Caco-2 (cell line): ENCODE measurements at regions of chr19 and their contacts with region 1.

Region 1: DNA sequence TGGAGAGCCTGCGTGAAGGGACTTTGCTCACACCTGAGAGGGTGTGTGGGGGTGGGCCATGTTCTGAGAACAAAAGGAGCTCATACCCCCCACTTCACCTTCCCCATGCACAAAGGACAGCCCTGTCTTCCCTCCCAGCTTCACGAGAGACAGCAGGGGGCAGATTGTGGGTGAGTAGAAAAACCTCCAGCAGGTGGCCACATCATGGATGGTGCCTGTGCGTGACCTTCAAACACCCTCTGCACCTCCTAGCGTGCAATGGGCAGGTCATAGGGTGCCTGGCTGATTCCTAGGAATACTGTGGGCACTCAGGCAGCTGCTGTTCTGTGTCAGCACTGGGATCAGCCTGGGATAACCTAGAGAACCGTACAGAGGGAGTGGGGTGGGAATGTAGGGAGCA is 36.3 kb upstream of the PSG9 start:
- DNase-seq: peak in 1 of 2 experiments; percentile 16
- H3K4me3 ChIP-seq: no peak overlapping the region
- H3K4me3 Mint-ChIP-seq: no peak overlapping the region
- H3K27ac Mint-ChIP-seq: no peak overlapping the region
- H3K4me1 ChIP-seq: no peaks in the 10 kb centered on the region
- H3K4me1 Mint-ChIP-seq: no peaks in the 10 kb centered on the region
- H3K27me3 ChIP-seq: no peaks in the 10 kb centered on the region
- H3K27me3 Mint-ChIP-seq: no peaks in the 10 kb centered on the region
- CTCF ChIP-seq: peak in 1 of 2 experiments; percentile 24

Region 2: DNA sequence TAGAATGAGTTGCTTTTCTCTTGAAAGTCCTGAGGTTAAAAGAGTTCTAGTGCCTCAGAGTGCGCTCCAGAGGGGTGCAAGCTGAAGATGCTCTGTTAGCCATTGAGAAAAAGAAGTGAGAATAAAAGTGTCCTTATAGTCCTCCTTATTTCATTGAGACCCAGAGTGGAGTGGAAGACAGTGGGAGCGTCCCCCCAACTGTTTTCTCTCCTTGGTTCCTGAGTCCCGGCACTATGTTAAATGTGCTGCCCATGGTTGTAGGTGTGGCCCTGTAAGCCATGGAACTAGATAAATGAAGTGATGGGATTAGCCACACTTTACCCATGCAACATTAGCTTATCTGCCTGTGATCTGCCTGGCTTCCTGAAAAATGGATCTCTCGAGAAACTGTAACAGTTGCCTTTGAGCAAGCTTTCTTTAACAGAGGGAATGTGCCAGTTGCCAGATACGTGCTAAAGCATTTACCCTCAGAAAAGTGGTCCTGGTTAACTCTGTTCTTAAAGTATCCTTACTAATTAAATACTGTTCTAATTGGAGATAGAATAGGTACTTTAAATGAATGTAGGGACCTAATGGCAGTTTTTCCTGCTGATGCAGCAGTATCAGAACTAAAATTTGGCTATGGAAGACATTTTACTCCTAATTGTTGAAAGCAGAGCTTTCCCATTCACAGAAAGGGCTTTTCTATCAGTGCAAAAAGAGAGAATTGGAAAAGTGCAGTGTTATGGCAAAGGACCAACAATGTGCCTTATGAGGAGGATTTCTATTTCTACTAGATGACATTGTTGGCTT is 14.9 kb before region 1 on chr19:
- CTCF ChIA-PET with region 1: no interaction called
- POLR2A ChIA-PET with region 1: no interaction called
- intact Hi-C with region 1: no loop called
- DNase-seq: peak in 1 of 2 experiments; percentile 60
- H3K4me3 ChIP-seq: no peak overlapping the region
- H3K4me3 Mint-ChIP-seq: no peak overlapping the region
- H3K27ac Mint-ChIP-seq: no peak overlapping the region
- H3K4me1 ChIP-seq: no peaks in the 10 kb centered on the region
- H3K4me1 Mint-ChIP-seq: no peaks in the 10 kb centered on the region
- H3K27me3 ChIP-seq: no peaks in the 10 kb centered on the region
- H3K27me3 Mint-ChIP-seq: no peaks in the 10 kb centered on the region
- CTCF ChIP-seq: no peak

Region 3: GRCh38 chr19:43329989-43330388 is 24.3 kb after region 1 on chr19:
- CTCF ChIA-PET with region 1: no interaction called
- POLR2A ChIA-PET with region 1: no interaction called
- intact Hi-C with region 1: loop called (anchors 2 kb)
- DNase-seq: no peak
- H3K4me3 ChIP-seq: no peak overlapping the region
- H3K4me3 Mint-ChIP-seq: no peak overlapping the region
- H3K27ac Mint-ChIP-seq: no peak overlapping the region
- H3K4me1 ChIP-seq: peaks cover 7% of the 10 kb centered on the region; the same call in 1 of the 2 replicates
- H3K4me1 Mint-ChIP-seq: no peaks in the 10 kb centered on the region
- H3K27me3 ChIP-seq: no peaks in the 10 kb centered on the region
- H3K27me3 Mint-ChIP-seq: no peaks in the 10 kb centered on the region
- CTCF ChIP-seq: no peak